ENCODE measurements at regions of chr4 and their contacts with region 1.

Region 1: DNA sequence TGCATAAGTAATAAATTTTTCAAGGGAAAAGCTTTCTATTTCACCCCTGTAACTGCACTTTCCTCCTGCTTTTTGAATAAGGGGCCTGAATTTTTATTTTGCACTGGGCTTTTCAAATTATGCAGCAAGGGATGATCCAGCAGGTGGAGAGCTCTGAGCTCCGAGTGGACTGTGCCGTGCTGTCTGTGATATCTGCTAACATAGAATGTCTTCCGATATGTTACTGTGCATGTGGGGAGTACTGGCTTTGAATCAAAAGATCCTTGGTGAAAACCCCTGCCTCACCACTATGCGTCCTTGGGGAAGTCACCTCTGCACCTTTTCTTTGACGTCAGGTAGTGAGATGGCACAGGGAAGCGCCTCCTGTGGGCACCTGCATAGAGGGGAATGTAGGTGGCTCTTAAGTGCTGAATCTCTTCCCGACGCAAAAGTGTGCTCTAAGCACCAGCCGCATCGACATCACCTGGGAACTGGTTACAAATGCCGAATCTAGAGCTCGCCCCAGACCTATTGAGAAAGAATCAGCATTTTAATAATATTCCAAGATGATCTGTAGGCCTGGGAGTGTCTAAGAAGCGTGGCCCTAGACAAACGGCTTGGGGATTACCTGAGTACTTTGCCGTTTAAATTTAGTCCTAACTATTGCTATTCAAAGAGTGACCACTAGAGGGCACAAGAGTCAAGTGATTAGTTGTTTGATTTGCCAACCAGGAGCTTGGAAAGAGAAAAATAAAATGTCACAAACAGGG is 19.2 kb upstream of the WFS1 start:
- DNase-seq: peak; percentile 58 to 62
- ATAC-seq: peak; percentile 61 to 74; a peak in 5 of 6 replicates
- H3K4me3 ChIP-seq: no peak overlapping the region
- H3K27ac ChIP-seq: no peak overlapping the region
- H3K4me1 ChIP-seq: no peaks in the 10 kb centered on the region
- CTCF ChIP-seq: peak; percentile 66
- EP300 ChIP-seq: no peak
- POLR2A ChIP-seq: no peak
- RAD21 ChIP-seq: peak; percentile 76 to 77

Region 2: GRCh38 chr4:5998333-5998936 is 252.0 kb before region 1 on chr4:
- CTCF ChIA-PET with region 1: interaction called, 15 read pairs
- POLR2A ChIA-PET with region 1: no interaction called
- DNase-seq: peak; percentile 61 to 64
- ATAC-seq: peak; percentile 86 to 95
- H3K4me3 ChIP-seq: no peak overlapping the region
- H3K27ac ChIP-seq: no peak overlapping the region
- H3K4me1 ChIP-seq: no peaks in the 10 kb centered on the region
- CTCF ChIP-seq: peak; percentile 91
- EP300 ChIP-seq: no peak
- POLR2A ChIP-seq: no peak
- RAD21 ChIP-seq: peak; percentile 79 to 82

Region 3: GRCh38 chr4:6269616-6270511 is 19.5 kb after region 1 on chr4 and contains the start of gene WFS1:
- CTCF ChIA-PET with region 1: interaction called, 75 read pairs
- POLR2A ChIA-PET with region 1: no interaction called
- DNase-seq: peak; percentile 94 to 97
- ATAC-seq: peak; percentile 98 to 100
- H3K4me3 ChIP-seq: peak within 1 kb of the TSS; percentile 87
- H3K27ac ChIP-seq: peak within 1 kb of the TSS; percentile 76 to 91
- H3K4me1 ChIP-seq: peaks cover 28% of the 10 kb centered on the region
- CTCF ChIP-seq: no peak
- EP300 ChIP-seq: no peak
- POLR2A ChIP-seq: peak; percentile 60
- RAD21 ChIP-seq: no peak
- polyA plus RNA-seq, gene WFS1: 8.8 and 12.0 TPM in 2 replicates

Region 4: GRCh38 chr4:6319530-6320150 is 69.2 kb after region 1 on chr4:
- CTCF ChIA-PET with region 1: interaction called, 408 read pairs
- POLR2A ChIA-PET with region 1: no interaction called
- DNase-seq: no peak
- ATAC-seq: no peak
- H3K4me3 ChIP-seq: no peak overlapping the region
- H3K27ac ChIP-seq: no peak overlapping the region
- H3K4me1 ChIP-seq: no peaks in the 10 kb centered on the region
- CTCF ChIP-seq: no peak
- EP300 ChIP-seq: no peak
- POLR2A ChIP-seq: no peak
- RAD21 ChIP-seq: no peak

Region 5: DNA sequence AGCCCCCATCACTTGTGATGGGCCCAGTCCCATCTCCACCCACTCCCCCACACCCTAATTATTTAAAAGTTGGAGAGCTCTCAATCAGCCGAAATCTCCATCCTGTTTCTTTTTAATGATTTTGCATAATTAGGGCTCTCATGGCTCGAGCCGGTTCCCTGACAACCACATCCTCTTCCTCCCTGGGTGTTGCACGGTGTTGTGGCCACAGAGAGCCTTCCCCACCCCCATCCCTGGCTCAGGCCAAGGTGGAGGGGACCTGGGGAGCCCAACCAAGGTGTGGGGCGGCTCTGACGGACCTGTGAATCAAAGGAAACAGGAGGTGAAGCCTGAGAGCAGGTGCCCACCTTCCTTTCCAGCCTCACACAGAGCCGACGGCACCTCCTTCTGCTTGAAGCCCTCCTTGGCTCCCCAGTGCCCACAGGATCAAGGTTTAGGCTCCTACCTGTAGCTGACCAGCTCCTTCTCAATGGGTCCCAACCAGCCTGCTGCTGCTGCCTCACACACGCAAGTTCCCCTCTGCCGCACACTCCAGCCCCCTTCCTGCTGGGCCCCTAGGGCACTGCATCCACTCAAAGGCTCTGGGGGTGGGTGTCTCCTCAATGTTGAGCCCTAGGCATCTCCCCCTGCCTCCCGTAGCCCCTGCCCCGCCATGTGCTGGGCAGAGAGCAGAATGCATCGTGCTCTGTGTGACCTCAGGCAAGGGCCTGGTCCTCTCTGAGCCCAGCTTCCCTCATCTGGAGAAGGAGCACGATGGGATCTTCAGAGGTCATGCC is 88.0 kb after region 1 on chr4:
- CTCF ChIA-PET with region 1: interaction called, 408 read pairs
- POLR2A ChIA-PET with region 1: no interaction called
- DNase-seq: no peak
- ATAC-seq: no peak
- H3K4me3 ChIP-seq: no peak overlapping the region
- H3K27ac ChIP-seq: no peak overlapping the region
- H3K4me1 ChIP-seq: peaks cover 4% of the 10 kb centered on the region
- CTCF ChIP-seq: no peak
- EP300 ChIP-seq: no peak
- POLR2A ChIP-seq: no peak
- RAD21 ChIP-seq: no peak

Region 6: DNA sequence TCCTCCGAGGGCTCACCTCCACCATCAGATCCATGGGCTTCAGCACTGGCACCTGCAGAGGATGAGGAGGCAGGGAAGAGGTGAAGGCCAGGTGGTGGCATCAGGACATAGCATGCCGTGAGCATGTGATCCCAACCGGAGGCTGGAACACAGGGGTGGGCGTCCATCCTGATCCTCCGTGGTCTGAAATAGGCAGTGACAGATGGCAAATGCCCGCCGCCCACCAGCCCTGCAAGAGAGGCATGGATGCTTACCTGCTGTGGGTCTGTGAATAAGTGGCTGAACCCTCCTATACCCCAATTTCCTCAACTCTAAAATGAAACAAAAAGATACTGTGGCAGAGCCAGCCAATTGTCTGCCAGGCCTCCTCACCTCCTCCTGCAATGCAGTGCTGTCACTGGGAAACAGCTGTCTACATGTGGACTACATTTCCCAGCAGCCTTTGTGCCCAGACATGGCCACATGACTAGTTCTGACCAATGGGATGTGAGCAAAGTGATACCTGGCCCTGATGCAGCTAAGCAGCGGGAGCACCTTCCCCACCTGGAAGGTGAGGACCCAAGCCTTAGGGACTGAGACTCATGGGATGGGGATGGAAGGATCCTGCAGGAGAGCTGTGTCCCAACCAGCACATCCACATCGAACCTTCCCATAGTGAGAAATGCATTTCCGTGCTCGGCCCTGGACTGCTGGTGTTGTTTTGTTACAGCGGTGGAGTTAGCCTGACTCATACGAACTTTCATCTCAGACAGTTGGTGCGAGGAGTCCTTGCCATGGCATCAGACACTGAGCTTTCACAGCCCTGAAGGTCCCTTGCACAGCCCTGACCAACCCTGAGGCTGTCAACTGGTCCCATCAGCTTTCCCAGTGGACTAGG is 122.5 kb after region 1 on chr4:
- CTCF ChIA-PET with region 1: interaction called, 10 read pairs
- POLR2A ChIA-PET with region 1: no interaction called
- DNase-seq: peak; percentile 47 to 57
- ATAC-seq: peak; percentile 67 to 84; a peak in 4 of 6 replicates
- H3K4me3 ChIP-seq: no peak overlapping the region
- H3K27ac ChIP-seq: no peak overlapping the region
- H3K4me1 ChIP-seq: no peaks in the 10 kb centered on the region
- CTCF ChIP-seq: no peak
- EP300 ChIP-seq: no peak
- POLR2A ChIP-seq: no peak
- RAD21 ChIP-seq: no peak